ENCODE measurements at regions of chr10 and their contacts with region 1.

Region 1: GRCh38 chr10:26481914-26482550 is 43.9 kb downstream of the APBB1IP start:
- DNase-seq: no peak
- ATAC-seq: peak; percentile 79
- H3K4me3 Mint-ChIP-seq: peak overlapping the region; percentile 46
- H3K27ac Mint-ChIP-seq: peak overlapping the region; percentile 83
- H3K4me1 Mint-ChIP-seq: peaks cover 82% of the 10 kb centered on the region
- H3K27me3 Mint-ChIP-seq: no peaks in the 10 kb centered on the region
- CTCF ChIP-seq: no peak

Region 2: GRCh38 chr10:25815999-25816768 is 665.8 kb before region 1 on chr10:
- CTCF ChIA-PET with region 1: no interaction called
- POLR2A ChIA-PET with region 1: no interaction called
- intact Hi-C with region 1: no loop called
- DNase-seq: no peak
- ATAC-seq: no peak
- H3K4me3 Mint-ChIP-seq: no peak overlapping the region
- H3K27ac Mint-ChIP-seq: no peak overlapping the region
- H3K4me1 Mint-ChIP-seq: peaks cover 7% of the 10 kb centered on the region
- H3K27me3 Mint-ChIP-seq: peaks cover 7% of the 10 kb centered on the region
- CTCF ChIP-seq: no peak

Region 3: GRCh38 chr10:25944780-25945179 is 537.3 kb before region 1 on chr10:
- CTCF ChIA-PET with region 1: no interaction called
- POLR2A ChIA-PET with region 1: no interaction called
- intact Hi-C with region 1: no loop called
- DNase-seq: no peak
- ATAC-seq: no peak
- H3K4me3 Mint-ChIP-seq: no peak overlapping the region
- H3K27ac Mint-ChIP-seq: no peak overlapping the region
- H3K4me1 Mint-ChIP-seq: no peaks in the 10 kb centered on the region
- H3K27me3 Mint-ChIP-seq: peaks cover 8% of the 10 kb centered on the region
- CTCF ChIP-seq: no peak

Region 4: GRCh38 chr10:26251925-26252324 is 230.1 kb before region 1 on chr10:
- CTCF ChIA-PET with region 1: no interaction called
- POLR2A ChIA-PET with region 1: no interaction called
- intact Hi-C with region 1: no loop called
- DNase-seq: no peak
- ATAC-seq: no peak
- H3K4me3 Mint-ChIP-seq: no peak overlapping the region
- H3K27ac Mint-ChIP-seq: no peak overlapping the region
- H3K4me1 Mint-ChIP-seq: no peaks in the 10 kb centered on the region
- H3K27me3 Mint-ChIP-seq: peaks cover 16% of the 10 kb centered on the region
- CTCF ChIP-seq: no peak

Region 5: DNA sequence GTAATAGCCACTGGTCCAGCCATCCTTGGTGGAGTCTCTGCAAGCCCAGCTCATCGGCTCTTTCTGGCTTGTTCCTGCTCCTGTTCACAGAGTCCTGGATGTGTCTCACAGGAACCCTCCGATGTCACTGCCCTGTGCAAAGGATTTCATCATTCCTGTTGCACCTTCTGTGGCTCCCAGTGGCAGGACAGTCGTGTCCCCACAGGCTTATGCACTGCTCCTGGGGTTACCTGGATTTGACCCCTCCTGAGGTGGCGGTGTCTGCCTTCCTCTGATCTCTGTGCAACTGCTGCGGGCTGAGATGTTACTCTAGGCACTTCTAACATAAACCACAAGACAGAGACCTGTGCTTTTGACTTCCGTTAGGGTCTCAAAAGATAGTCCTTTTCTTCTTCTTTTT is 13.3 kb before region 1 on chr10:
- CTCF ChIA-PET with region 1: interaction called, 3 read pairs
- POLR2A ChIA-PET with region 1: interaction called, 11 read pairs
- intact Hi-C with region 1: loop called (anchors 1 kb)
- DNase-seq: no peak
- ATAC-seq: peak; percentile 47
- H3K4me3 Mint-ChIP-seq: peak overlapping the region; percentile 73
- H3K27ac Mint-ChIP-seq: peak overlapping the region; percentile 85
- H3K4me1 Mint-ChIP-seq: peaks cover 91% of the 10 kb centered on the region
- H3K27me3 Mint-ChIP-seq: no peaks in the 10 kb centered on the region
- CTCF ChIP-seq: no peak

Region 6: DNA sequence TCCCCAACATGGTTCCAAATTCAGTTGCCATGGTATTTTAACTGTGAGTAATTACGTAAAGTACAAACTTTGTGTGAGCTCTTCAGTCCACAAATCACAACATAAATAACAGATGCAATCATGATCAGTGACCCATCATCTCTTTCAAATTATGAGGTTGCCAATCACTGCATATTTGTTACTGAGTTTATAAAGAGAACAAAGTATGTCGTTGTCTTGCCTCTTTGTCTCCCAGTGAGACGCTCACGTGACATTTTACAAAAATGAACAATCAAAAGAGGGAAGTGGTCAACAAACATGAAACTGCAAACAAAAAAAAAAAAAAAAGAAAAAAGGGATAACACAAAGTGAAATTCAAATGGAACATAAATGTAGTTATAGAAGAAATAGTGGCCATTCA is 92.8 kb after region 1 on chr10:
- CTCF ChIA-PET with region 1: no interaction called
- POLR2A ChIA-PET with region 1: no interaction called
- intact Hi-C with region 1: no loop called
- DNase-seq: no peak
- ATAC-seq: peak; percentile 78
- H3K4me3 Mint-ChIP-seq: peak overlapping the region; percentile 51
- H3K27ac Mint-ChIP-seq: peak overlapping the region; percentile 84
- H3K4me1 Mint-ChIP-seq: peaks cover 29% of the 10 kb centered on the region
- H3K27me3 Mint-ChIP-seq: no peaks in the 10 kb centered on the region
- CTCF ChIP-seq: no peak